ENCODE measurements at regions of chr13 and their contacts with region 1.

Region 1: DNA sequence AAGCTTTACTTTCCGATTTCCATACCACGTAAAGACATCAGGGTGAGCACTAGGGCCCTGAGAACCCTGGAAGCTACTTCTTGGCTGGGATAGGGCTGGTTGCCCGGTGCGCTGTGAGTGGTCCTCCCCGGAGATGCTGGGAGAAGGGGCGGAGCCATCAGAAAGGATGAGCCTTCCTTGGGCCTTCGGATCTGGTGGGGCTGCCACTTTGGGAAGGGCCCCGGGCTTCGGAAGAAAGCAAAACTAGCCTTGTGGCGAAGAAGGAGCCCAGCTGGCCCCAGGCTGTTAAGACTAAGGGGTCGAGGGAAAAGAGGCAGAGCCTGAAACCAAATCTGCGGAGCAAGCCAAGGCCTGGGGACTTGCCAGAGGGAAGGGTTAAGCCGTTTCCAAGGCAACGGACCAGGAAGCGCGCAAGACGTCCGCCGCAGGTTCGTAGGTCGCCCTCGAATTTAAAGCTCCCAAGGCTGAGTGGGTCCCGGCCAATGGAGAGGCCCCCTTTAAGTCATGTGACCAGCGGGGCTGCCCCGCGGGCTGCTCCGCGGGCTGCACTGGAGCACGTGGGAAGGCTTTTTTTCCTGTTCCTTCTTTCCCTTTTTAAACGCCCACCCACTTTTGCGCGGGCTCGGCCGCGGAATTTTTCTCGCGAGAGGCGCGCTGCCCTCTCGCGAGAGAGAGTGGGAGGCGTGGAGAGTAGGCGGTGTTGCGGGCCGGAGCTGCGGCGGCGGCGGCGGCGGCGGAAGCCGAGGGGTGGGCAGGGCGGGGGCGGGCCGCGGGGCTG is 426 bp upstream of the AKAP11 start:
- DNase-seq: peak; percentile 95 to 98 (median 96)
- H3K4me3 ChIP-seq: peak overlapping the region; percentile 82 to 93
- H3K4me3 Mint-ChIP-seq: peak overlapping the region; percentile 88 to 99 (median 97)
- H3K27ac ChIP-seq: peak overlapping the region; percentile 94
- H3K27ac Mint-ChIP-seq: peak overlapping the region; percentile 98 to 99 (median 98)
- H3K4me1 ChIP-seq: peaks cover 46% of the 10 kb centered on the region
- H3K4me1 Mint-ChIP-seq: peaks cover 35 to 60% (median 47%) of the 10 kb centered on the region in 4 donors
- H3K27me3 ChIP-seq: no peaks in the 10 kb centered on the region
- H3K27me3 Mint-ChIP-seq: no peaks in the 10 kb centered on the region

Region 2: DNA sequence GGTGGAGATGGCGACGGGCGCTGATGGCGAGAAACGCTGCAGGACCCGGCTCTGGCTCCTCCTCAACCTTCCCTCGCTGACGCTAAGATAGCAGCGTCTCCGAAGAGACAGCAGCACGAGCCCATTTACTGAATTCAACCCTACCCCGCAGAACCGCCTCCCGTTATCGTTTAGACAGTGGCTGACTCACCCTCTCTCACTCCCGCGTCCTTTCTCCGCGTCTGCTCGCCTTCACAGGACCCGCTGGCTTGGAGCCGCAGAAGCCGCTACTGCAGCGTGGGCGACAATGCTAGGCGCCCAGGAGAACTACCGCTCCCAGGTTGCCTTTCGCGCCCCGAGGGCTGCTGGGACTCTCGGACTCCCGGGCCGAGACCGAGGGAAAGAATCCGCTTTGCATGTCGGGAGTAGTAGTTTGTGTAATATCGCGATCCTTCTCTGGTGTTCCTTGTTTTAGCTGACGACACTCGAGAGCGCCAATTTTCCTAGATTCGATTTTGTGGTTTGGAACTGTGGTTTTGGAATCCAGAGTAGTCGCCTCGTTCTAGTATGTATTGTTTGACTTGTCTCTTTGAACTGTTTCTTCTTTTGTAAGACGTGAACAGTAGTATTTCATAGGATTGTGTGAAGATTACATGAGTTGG is 1138.9 kb before region 1 on chr13 and contains the start of gene KBTBD6:
- CTCF ChIA-PET with region 1: no interaction called
- POLR2A ChIA-PET with region 1: interaction called, 4 read pairs
- intact Hi-C with region 1: loop called (anchors 5 kb)
- DNase-seq: peak; percentile 89 to 95 (median 90)
- H3K4me3 ChIP-seq: peak within 1 kb of the TSS; percentile 56
- H3K4me3 Mint-ChIP-seq: peak within 1 kb of the TSS; percentile 95 to 100 (median 99)
- H3K27ac ChIP-seq: peak within 1 kb of the TSS; percentile 63
- H3K27ac Mint-ChIP-seq: peak within 1 kb of the TSS; percentile 91 to 98 (median 98)
- H3K4me1 ChIP-seq: peaks cover 49% of the 10 kb centered on the region
- H3K4me1 Mint-ChIP-seq: peaks cover 39 to 55% (median 46%) of the 10 kb centered on the region in 4 donors
- H3K27me3 ChIP-seq: no peaks in the 10 kb centered on the region
- H3K27me3 Mint-ChIP-seq: no peaks in the 10 kb centered on the region
- total RNA-seq, gene KBTBD6: 9.9 to 10.5 TPM

Region 3: DNA sequence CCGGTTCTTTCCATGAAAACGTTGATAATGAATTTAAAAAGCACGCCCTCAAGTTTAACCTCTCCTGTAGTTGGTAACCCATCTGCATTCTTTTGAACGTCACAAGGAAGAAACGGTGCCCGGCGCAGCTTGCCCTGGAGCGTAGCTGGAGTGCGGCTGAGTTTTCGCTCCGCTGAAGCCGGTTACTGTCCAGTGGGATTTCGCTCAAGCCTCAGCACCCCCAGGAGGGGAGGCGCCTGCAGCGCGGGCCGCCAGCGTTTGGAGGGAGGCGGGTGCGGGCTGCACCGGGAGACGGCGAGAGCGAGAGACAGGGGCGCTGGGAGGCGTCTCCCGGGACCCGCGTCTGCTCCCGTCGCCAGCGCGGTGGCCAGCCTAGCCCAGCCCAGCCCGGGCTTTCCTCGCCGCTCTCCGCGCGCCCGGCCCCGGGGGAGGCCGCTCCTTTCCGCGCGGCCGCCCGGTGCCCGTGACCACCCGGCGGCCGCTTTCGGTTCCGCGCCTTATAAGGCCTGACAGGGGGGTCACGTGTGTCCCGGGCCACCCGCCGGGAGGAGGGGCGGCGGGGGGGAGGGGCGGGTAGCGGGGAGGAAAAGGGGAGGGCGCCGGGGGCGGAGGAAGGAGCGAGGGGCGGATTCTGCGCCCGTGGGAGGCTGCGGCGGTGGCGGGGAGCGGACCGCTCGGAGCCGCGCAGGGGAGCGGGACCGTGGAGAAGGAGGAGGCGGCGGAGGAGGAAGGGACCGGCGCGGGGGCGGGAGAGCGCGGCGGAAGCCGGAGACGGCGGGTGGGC is 231.4 kb before region 1 on chr13:
- CTCF ChIA-PET with region 1: no interaction called
- POLR2A ChIA-PET with region 1: no interaction called
- intact Hi-C with region 1: loop called (anchors 5 kb)
- DNase-seq: peak; percentile 84 to 87 (median 86)
- H3K4me3 ChIP-seq: peak overlapping the region; percentile 58 to 82
- H3K4me3 Mint-ChIP-seq: peak overlapping the region; percentile 84 to 94 (median 92)
- H3K27ac ChIP-seq: peak overlapping the region; percentile 65
- H3K27ac Mint-ChIP-seq: peak overlapping the region; percentile 86 to 95 (median 89)
- H3K4me1 ChIP-seq: peaks cover 13% of the 10 kb centered on the region
- H3K4me1 Mint-ChIP-seq: peaks cover 17 to 24% (median 19%) of the 10 kb centered on the region in 4 donors
- H3K27me3 ChIP-seq: no peaks in the 10 kb centered on the region
- H3K27me3 Mint-ChIP-seq: no peaks in the 10 kb centered on the region

Region 4: GRCh38 chr13:43023289-43023951 is 751.9 kb after region 1 on chr13 and contains the start of gene DNAJC15:
- CTCF ChIA-PET with region 1: no interaction called
- POLR2A ChIA-PET with region 1: no interaction called
- intact Hi-C with region 1: loop called (anchors 1 kb)
- DNase-seq: peak; percentile 81 to 87 (median 84)
- H3K4me3 ChIP-seq: peak within 1 kb of the TSS; percentile 85 to 92
- H3K4me3 Mint-ChIP-seq: peak within 1 kb of the TSS; percentile 90 to 100 (median 98)
- H3K27ac ChIP-seq: peak within 1 kb of the TSS; percentile 66
- H3K27ac Mint-ChIP-seq: peak within 1 kb of the TSS; percentile 87 to 99 (median 98)
- H3K4me1 ChIP-seq: peaks cover 35% of the 10 kb centered on the region
- H3K4me1 Mint-ChIP-seq: peaks cover 19 to 42% (median 32%) of the 10 kb centered on the region in 4 donors
- H3K27me3 ChIP-seq: no peaks in the 10 kb centered on the region
- H3K27me3 Mint-ChIP-seq: no peaks in the 10 kb centered on the region
- total RNA-seq, gene DNAJC15: 9.7 to 11.1 TPM

Measured in CD4-positive, alpha-beta memory T cell (primary cell).